ENCODE measurements at regions of chr16 and their contacts with region 1.

Region 1: GRCh38 chr16:1942810-1943726 is at the start of gene MSRB1:
- DNase-seq: peak; percentile 100
- H3K4me3 Mint-ChIP-seq: peak within 1 kb of the TSS; percentile 87
- H3K27ac Mint-ChIP-seq: peak within 1 kb of the TSS; percentile 58
- H3K4me1 Mint-ChIP-seq: peaks cover 19% of the 10 kb centered on the region
- H3K27me3 Mint-ChIP-seq: no peaks in the 10 kb centered on the region
- total RNA-seq, gene MSRB1: 22.1 and 26.1 TPM in 2 replicates

Region 2: GRCh38 chr16:1782352-1783091 is 160.5 kb before region 1 on chr16 and contains the starts of genes NUBP2 and SPSB3:
- intact Hi-C with region 1: loop called (anchors 1 kb)
- DNase-seq: peak; percentile 99
- H3K4me3 Mint-ChIP-seq: peak within 1 kb of the TSS; percentile 93
- H3K27ac Mint-ChIP-seq: peak within 1 kb of the TSS; percentile 81
- H3K4me1 Mint-ChIP-seq: no peaks in the 10 kb centered on the region
- H3K27me3 Mint-ChIP-seq: no peaks in the 10 kb centered on the region
- total RNA-seq, gene NUBP2: 81.6 and 82.8 TPM in 2 replicates
- total RNA-seq, gene SPSB3: 30.3 and 30.8 TPM in 2 replicates

Region 3: GRCh38 chr16:1929578-1930337 is 13.3 kb before region 1 on chr16:
- intact Hi-C with region 1: loop called (anchors 1 kb)
- DNase-seq: peak; percentile 91
- H3K4me3 Mint-ChIP-seq: no peak overlapping the region
- H3K27ac Mint-ChIP-seq: no peak overlapping the region
- H3K4me1 Mint-ChIP-seq: no peaks in the 10 kb centered on the region
- H3K27me3 Mint-ChIP-seq: peaks cover 2% of the 10 kb centered on the region

Region 4: DNA sequence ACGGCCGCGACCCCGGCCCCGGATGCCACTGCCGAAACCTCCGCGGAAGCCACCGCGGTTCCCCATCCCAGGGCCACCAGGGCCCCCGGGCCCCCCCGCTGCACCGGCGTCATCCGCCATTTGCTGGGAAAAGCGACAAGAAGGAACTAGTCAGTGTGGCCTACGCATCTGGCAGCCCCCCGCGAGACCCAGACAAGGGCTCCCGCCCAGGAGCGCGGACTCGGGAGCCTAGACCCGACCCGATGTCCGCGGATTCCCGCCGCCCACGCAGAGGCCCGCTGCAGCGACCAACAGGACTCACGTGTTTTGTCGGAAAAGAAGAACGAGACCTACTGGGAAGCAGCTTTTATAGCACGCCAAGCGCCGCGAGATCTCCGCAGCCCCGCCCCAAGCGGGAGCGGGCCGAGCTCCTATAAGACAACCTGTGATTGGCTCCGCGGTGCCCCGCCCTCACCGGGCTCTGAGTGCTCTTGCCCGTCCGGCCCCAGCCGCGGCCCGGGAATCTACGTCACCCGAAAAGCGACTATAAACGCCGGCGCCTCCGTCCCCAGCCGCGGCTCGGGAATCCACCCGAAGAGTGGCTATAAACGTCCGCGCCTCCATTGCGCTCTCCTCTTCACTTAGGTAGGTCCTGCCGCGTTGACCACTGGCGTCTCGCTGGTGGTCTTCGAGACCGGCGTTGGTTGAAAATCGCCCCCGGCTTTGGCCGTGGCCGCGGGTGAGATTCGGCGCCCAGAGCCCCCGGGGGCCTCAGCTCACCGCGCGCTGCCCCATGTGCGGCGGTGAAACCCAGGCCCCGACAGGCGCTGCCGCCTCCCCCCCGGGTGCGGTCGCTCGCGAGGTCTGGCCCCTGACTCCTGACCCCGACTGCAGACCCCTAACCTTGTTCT is 21.7 kb after region 1 on chr16 and contains the start of gene RPS2:
- intact Hi-C with region 1: loop called (anchors 1 kb)
- DNase-seq: peak; percentile 99
- H3K4me3 Mint-ChIP-seq: peak within 1 kb of the TSS; percentile 100
- H3K27ac Mint-ChIP-seq: peak within 1 kb of the TSS; percentile 97
- H3K4me1 Mint-ChIP-seq: peaks cover 34% of the 10 kb centered on the region
- H3K27me3 Mint-ChIP-seq: no peaks in the 10 kb centered on the region
- total RNA-seq, gene RPS2: 3,144 and 3,145 TPM in 2 replicates

Region 5: GRCh38 chr16:2082160-2082982 is 139.3 kb after region 1 on chr16:
- intact Hi-C with region 1: no loop called
- DNase-seq: no peak
- H3K4me3 Mint-ChIP-seq: no peak overlapping the region
- H3K27ac Mint-ChIP-seq: no peak overlapping the region
- H3K4me1 Mint-ChIP-seq: no peaks in the 10 kb centered on the region
- H3K27me3 Mint-ChIP-seq: no peaks in the 10 kb centered on the region

Region 6: GRCh38 chr16:2142942-2143877 is 200.1 kb after region 1 on chr16:
- intact Hi-C with region 1: loop called (anchors 5 kb)
- DNase-seq: no peak
- H3K4me3 Mint-ChIP-seq: no peak overlapping the region
- H3K27ac Mint-ChIP-seq: no peak overlapping the region
- H3K4me1 Mint-ChIP-seq: peaks cover 10% of the 10 kb centered on the region
- H3K27me3 Mint-ChIP-seq: peaks cover 15% of the 10 kb centered on the region

Measured in activated T-helper 1 cell treated with anti-CD3 and anti-CD28 coated beads, Interleukin-12 subunit alpha, Interleukin-12 subunit beta, Interleukin-2, Interleukin-4 antibody, amounts not matched to agents 30 ng/mL and 10 ng/mL and 1 ng/mL, durations not matched to agents 14 hours and 24 hours and 36 hours (primary cell).